ENCODE measurements at regions of chr11 and their contacts with region 1.

Region 1: GRCh38 chr11:127943763-127944162 is 643.6 kb downstream of the ETS1 start:
- DNase-seq: peak; percentile 19
- H3K4me3 Mint-ChIP-seq: no peak overlapping the region
- H3K27ac Mint-ChIP-seq: no peak overlapping the region
- H3K4me1 Mint-ChIP-seq: peaks cover 13% of the 10 kb centered on the region
- H3K27me3 Mint-ChIP-seq: peaks cover 10% of the 10 kb centered on the region

Region 2: DNA sequence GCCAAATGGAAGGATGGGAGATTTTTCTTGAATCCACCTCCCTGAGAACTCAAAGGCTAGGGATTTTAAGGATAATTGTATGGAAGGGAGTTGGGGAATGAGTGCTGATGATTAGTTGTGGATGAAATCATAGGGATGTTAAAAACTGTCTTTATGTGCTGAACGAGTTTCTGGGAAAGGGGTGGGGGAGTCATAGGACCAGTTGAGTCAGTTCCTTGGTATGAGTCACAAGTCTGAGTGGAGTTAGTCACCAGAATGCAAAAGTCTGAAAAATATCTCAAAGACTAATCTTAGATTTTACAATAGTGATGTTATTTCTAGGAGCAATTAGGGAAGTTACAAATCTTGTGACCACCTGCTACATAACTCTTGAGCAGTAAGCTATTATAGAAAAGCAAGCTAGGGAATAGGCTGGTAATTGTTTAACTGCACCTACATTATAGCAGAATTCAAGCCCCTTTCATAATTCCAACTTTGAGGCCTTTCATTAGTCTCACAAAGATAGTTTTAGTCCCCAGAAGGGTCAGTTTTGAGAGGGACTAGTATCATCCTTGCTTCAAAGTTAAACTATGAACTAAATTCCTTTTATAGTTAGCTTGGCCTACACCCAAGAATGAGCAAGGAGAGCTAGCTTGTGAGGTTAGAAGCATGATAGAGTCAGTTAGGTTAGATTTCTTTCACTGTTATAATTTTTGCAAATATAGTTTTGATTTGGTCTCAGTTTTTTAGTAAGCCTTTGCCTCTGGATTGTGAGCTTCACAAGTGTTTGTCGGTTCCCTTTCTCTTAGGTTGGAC is 24.4 kb before region 1 on chr11:
- CTCF ChIA-PET with region 1: no interaction called
- intact Hi-C with region 1: loop called (anchors 2 kb)
- DNase-seq: peak; percentile 54
- H3K4me3 Mint-ChIP-seq: no peak overlapping the region
- H3K27ac Mint-ChIP-seq: no peak overlapping the region
- H3K4me1 Mint-ChIP-seq: peaks cover 15% of the 10 kb centered on the region
- H3K27me3 Mint-ChIP-seq: peaks cover 19% of the 10 kb centered on the region

Region 3: DNA sequence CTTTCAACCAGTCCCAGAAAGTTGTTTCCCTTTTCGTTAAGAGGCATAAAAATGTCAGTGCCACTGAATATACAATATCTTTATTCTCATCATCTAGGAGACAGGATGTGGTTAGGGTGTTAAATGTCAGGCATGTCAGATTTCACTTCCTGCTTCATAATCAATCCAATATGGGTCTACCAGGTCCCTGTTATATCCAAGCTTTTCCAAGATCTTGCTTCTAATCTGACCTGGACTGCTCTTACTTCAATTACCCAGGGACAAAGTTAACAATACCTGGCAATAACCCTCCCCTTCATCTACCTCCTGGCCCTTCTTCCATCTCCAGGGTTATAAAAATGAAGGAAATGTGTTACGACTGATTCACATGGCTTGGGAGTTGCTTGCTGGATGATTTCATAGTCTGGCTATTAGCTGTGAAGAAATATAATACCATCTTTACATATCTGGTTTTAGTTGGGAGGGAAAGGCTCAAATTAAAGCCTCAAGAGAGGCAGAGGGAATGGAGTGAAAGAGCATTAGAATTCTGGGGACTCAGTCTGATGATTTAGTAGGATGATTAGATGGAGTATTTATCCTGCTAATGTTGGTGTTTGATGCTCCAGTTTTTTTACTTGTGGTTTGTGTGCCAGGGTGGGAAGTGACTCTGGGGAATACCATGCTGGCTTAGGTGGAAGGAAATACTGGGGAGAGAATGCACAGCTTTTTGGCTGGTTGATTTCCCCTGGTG is 109.3 kb after region 1 on chr11:
- CTCF ChIA-PET with region 1: no interaction called
- intact Hi-C with region 1: no loop called
- DNase-seq: no peak
- H3K4me3 Mint-ChIP-seq: peak overlapping the region; percentile 49
- H3K27ac Mint-ChIP-seq: peak overlapping the region; percentile 86
- H3K4me1 Mint-ChIP-seq: peaks cover 67% of the 10 kb centered on the region
- H3K27me3 Mint-ChIP-seq: no peaks in the 10 kb centered on the region

Region 4: DNA sequence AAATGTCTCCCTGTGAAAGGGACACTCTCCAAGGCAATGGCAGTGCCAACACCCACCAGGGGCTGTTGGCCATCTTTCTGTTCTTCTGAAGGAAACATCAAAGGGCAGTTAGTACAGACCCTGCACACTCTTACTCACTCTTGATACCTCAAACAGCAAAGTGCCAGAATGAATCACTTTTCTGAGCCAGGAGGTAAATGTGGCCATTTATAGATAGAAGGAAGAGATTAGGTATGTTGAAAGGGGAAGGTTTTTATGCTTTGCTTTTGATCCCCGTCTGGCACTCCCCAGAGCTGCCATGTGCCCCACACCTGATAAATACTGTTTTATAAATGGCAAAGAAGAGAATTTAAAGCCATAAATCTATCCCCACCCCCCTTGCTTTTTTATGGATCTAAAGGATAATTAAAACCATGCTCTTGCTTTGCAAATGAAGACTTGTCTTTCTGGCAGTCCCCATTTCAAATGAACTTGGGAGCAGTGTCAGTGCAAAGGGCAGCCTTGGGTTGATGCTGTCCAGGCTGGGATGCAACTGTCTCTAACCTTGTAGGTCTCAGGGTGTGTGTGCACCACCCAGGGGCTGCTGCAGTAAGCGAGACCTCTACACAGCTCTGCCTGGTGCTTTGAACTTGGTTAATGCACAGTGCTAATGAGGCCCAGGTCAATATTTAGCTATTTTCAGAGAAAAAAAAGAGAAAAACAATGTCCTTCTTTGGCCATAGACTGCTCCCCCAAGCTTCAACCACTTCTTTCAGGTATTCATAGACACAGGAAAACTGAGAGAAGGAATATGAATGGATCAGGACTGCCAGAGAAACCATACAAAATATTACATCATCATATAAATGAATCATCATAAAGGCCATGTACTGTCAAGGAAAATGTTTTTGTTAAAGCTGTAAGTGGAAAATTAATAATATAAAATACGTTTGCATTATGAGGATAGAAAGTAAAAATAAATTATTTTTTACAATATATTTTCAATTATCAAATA is 436.1 kb after region 1 on chr11:
- CTCF ChIA-PET with region 1: no interaction called
- intact Hi-C with region 1: no loop called
- DNase-seq: peak; percentile 56
- H3K4me3 Mint-ChIP-seq: no peak overlapping the region
- H3K27ac Mint-ChIP-seq: peak overlapping the region; percentile 61
- H3K4me1 Mint-ChIP-seq: peaks cover 37% of the 10 kb centered on the region
- H3K27me3 Mint-ChIP-seq: no peaks in the 10 kb centered on the region